ENCODE measurements at regions of chr6 and their contacts with region 1.

Region 1: GRCh38 chr6:99879431-99879830 is 114.6 kb downstream of the MCHR2 start:
- DNase-seq: peak in 1 of 4 donors; percentile 41
- ATAC-seq: no peak
- H3K4me3 ChIP-seq: no peak overlapping the region
- H3K27ac ChIP-seq: no peak overlapping the region
- H3K4me1 ChIP-seq: no peaks in the 10 kb centered on the region
- H3K27me3 ChIP-seq: no peaks in the 10 kb centered on the region
- CTCF ChIP-seq: no peak

Region 2: DNA sequence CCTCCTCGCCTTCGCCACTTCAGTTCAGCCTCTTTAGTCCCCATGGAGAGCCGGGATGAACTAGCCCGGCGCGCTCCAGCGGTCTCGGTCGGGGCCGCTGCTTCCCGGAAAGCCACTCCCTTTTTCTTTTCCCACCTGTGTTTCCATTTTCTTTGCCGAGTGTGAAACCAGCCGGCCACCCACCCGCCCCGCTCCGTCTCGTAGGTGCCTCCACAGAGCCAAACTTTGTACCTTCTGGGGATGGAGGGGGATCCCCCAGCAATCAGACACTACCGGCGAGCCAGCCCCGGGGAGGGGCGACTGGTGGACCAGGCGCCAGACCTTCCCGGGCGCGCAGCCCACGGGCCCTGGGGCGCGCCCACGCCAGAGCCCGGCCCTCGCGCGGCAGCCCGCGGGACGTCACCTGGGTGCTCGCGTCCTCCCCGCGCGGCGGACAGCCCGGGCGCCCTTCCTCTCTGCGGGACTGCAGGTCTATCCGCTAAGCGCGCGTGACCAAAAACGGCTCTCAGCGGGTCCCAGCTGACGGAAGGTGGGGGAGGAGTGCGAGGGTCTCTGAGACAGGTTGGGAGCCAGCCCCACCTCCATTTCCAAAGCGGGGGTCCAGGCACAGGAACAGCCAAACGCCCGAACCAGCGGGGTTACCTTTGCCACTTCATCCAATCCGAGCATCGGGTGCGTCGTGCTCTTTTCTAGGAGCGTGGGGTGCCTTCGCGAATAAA is 114.3 kb after region 1 on chr6 and contains the start of gene MCHR2:
- intact Hi-C with region 1: loop called in 1 of 2 experiments (anchors 10 kb)
- DNase-seq: peak in 1 of 4 donors; percentile 74
- ATAC-seq: peak; percentile 56
- H3K4me3 ChIP-seq: peak within 1 kb of the TSS in 1 of 2 donors; percentile 7
- H3K27ac ChIP-seq: no peak within 1 kb of the TSS
- H3K4me1 ChIP-seq: no peaks in the 10 kb centered on the region
- H3K27me3 ChIP-seq: peaks cover 26 to 46% of the 10 kb centered on the region in 2 donors
- CTCF ChIP-seq: no peak
- polyA plus RNA-seq, gene MCHR2: not detected

Region 3: DNA sequence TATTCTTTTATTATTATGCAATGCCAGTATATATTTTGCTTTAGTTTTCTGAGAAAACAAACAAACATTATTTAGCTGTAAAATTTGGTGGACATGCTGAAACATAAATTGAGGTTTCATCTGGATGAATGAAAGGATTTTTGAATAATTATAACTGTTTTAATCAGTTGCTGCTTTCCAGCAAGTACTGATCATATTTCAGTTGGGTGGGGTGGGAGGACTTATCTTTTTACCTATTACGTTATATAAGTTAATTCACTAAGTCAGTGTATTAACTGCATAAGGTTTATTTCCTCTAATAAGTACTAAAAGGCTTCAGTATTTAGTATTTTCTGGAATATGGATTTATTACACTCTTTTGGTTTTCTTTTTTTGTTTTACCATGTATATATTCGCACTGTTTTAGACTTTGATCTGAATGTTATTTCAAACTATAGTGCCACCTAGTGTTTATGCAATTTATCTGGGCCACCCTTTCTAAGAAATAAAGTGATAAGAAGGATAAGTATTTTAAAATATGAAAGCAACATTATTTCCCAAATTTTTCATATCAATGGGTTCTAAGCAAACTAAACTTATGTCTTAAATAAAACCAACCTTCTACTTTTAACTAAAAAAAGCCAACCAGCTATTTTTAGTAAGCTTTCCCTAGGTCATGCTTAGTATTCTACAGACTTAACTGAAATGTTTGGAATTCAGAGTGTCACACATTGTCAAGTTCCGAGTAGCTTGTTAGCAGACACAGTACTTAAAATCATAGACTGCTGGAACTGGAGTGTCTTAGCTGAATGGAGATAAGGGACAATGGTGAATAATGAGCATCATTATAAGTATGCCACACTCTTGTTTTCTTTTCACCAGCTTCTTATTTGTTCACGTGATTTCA is 220.0 kb after region 1 on chr6:
- intact Hi-C with region 1: loop called in 1 of 2 experiments (anchors 10 kb)
- DNase-seq: no peak
- ATAC-seq: peak; percentile 64
- H3K4me3 ChIP-seq: no peak overlapping the region
- H3K27ac ChIP-seq: no peak overlapping the region
- H3K4me1 ChIP-seq: no peaks in the 10 kb centered on the region
- H3K27me3 ChIP-seq: peaks cover 5 to 6% of the 10 kb centered on the region in 2 donors
- CTCF ChIP-seq: peak; percentile 19 to 43

Region 4: DNA sequence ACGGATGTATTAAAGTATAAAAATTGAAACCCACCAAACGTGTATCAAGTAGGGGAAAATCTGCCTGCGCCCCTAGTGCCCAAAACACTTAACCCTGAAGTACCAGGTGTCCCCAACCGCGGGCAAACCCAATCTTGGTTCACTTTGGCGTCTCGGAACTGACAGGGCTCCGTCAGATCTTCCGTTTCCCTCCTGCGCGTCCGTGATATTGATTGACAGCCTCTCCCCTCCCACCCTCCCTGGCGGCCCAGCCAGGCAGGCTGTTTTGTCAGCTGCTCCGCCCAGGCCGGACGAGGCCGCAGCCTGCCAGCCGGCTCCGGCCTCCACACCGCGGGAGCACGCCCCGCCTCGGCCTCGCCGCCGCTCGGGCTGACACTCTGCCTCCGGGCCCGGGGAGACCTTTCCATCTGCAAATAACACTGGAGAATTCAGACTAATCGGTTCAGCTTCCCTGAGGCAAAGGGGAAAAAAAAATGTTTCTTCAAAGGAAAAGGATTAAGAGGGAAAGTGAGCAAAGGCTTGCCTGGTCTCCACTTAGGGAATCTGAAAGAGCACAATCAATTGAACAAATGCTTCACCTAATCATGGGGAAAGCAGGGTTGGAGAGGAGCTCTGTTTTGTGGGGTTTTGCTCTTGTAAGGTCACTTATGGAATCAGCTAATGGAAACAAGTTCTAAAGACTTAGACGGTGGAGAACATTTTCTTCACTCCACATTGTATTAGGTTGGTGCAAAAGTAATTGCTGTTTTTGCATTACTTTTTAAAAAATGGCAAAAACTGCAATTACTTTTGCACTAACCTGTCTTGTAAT is 349.6 kb after region 1 on chr6:
- intact Hi-C with region 1: no loop called
- DNase-seq: peak; percentile 42 to 92 (median 70)
- ATAC-seq: peak; percentile 100
- H3K4me3 ChIP-seq: peak overlapping the region; percentile 27 to 32
- H3K27ac ChIP-seq: peak overlapping the region in 1 of 2 donors; percentile 35
- H3K4me1 ChIP-seq: peaks cover 0 to 4% of the 10 kb centered on the region in 2 donors
- H3K27me3 ChIP-seq: peaks cover 0 to 13% of the 10 kb centered on the region in 2 donors
- CTCF ChIP-seq: no peak